Activated CD4-positive, alpha-beta T cell treated with anti-CD3 and anti-CD28 coated beads for 36 hours (primary cell): ENCODE measurements at regions of chr14 and their contacts with region 1.

Region 1: DNA sequence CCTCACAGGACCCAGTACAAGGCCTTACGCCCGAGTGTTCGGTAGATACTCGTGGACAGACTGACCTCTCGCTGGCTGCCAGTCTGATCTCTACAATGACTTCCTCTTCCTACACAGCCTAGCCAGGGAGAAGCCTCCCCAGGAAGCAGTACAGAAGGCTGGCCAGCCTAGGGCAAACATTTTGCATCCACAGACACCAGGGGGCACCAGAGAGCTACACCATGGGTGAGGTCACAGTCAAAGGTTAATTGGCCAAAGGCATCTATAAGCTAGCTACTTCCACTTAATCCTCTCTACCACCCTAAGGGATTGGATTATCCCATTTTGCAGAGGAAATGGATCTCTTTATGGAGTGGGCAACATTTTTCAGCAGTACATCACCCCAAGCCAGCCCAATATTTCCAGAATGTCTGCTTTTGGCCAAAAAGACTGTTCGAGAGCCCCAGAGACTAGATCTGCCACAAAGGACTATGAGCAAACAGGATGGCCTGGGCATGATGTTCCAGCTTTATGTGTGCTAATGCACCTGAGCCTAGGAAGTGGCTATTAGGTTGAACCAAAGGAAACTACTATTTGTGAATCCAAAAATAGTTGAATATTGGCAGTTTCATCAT is 14.6 kb upstream of the PNMA1 start:
- DNase-seq: peak; percentile 93
- ATAC-seq: peak; percentile 90
- H3K4me3 Mint-ChIP-seq: no peak overlapping the region
- H3K27ac Mint-ChIP-seq: peak overlapping the region; percentile 64
- H3K4me1 Mint-ChIP-seq: peaks cover 38% of the 10 kb centered on the region
- H3K27me3 Mint-ChIP-seq: no peaks in the 10 kb centered on the region

Region 2: GRCh38 chr14:73741386-73741875 is 12.6 kb after region 1 on chr14:
- CTCF ChIA-PET with region 1: interaction called, 90 read pairs
- POLR2A ChIA-PET with region 1: interaction called, 4 read pairs
- intact Hi-C with region 1: no loop called
- DNase-seq: peak; percentile 85
- ATAC-seq: peak; percentile 80
- H3K4me3 Mint-ChIP-seq: peak overlapping the region; percentile 66
- H3K27ac Mint-ChIP-seq: peak overlapping the region; percentile 82
- H3K4me1 Mint-ChIP-seq: peaks cover 65% of the 10 kb centered on the region
- H3K27me3 Mint-ChIP-seq: no peaks in the 10 kb centered on the region

Region 3: GRCh38 chr14:73777401-73777800 is 48.6 kb after region 1 on chr14:
- CTCF ChIA-PET with region 1: interaction called, 14 read pairs
- POLR2A ChIA-PET with region 1: no interaction called
- intact Hi-C with region 1: loop called in 1 of 2 experiments (anchors 1 kb)
- DNase-seq: peak; percentile 48
- ATAC-seq: peak; percentile 63
- H3K4me3 Mint-ChIP-seq: no peak overlapping the region
- H3K27ac Mint-ChIP-seq: peak overlapping the region; percentile 62
- H3K4me1 Mint-ChIP-seq: peaks cover 67% of the 10 kb centered on the region
- H3K27me3 Mint-ChIP-seq: no peaks in the 10 kb centered on the region

Region 4: DNA sequence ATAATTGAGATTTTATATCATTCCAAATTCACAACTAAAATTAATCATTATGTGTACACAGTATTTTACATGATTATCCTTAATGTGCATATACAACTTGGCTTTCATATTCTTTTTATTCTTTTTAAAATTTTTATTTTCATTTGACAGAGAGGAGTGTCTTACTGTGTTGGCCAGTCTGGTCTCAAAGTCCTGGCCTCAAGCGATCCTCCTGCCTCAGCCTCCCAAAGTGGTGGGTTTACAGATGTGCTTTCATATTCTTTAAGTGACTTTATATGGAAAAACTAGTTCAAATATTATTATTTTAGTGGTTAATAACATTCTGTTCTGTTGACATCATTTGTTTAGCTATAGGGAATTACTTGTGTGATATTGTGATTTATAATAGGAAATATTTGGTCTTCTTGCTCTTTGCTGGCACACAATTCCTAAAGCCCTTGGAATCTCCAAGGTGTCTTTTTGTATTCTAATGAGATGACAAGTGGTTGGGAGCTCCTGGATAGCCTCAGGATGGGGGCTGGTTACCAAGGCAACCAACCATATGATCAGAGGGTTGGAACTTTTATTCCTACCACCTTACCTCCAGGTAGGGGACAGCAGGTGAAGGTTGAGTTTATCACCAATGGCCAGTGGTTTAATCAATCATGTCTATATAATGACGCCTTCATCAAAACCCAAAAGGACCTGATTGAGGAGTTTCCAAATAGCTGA is 141.9 kb after region 1 on chr14:
- CTCF ChIA-PET with region 1: interaction called, 4 read pairs
- POLR2A ChIA-PET with region 1: no interaction called
- intact Hi-C with region 1: loop called in 1 of 2 experiments (anchors 1 kb)
- DNase-seq: no peak
- ATAC-seq: no peak
- H3K4me3 Mint-ChIP-seq: no peak overlapping the region
- H3K27ac Mint-ChIP-seq: no peak overlapping the region
- H3K4me1 Mint-ChIP-seq: no peaks in the 10 kb centered on the region
- H3K27me3 Mint-ChIP-seq: no peaks in the 10 kb centered on the region